HAP-1 (cell line): ENCODE measurements at regions of chr1 and their contacts with region 1.

Region 1: GRCh38 chr1:20981915-20982314 is 194.8 kb downstream of the EIF4G3 start:
- DNase-seq: no peak
- H3K4me3 ChIP-seq: no peak overlapping the region
- H3K4me1 ChIP-seq: no peaks in the 10 kb centered on the region
- H3K27me3 ChIP-seq: no peaks in the 10 kb centered on the region

Region 2: GRCh38 chr1:20840731-20841130 is 141.2 kb before region 1 on chr1:
- in situ Hi-C with region 1: no loop called
- DNase-seq: no peak
- H3K4me3 ChIP-seq: no peak overlapping the region
- H3K4me1 ChIP-seq: peaks cover 12% of the 10 kb centered on the region
- H3K27me3 ChIP-seq: no peaks in the 10 kb centered on the region

Region 3: DNA sequence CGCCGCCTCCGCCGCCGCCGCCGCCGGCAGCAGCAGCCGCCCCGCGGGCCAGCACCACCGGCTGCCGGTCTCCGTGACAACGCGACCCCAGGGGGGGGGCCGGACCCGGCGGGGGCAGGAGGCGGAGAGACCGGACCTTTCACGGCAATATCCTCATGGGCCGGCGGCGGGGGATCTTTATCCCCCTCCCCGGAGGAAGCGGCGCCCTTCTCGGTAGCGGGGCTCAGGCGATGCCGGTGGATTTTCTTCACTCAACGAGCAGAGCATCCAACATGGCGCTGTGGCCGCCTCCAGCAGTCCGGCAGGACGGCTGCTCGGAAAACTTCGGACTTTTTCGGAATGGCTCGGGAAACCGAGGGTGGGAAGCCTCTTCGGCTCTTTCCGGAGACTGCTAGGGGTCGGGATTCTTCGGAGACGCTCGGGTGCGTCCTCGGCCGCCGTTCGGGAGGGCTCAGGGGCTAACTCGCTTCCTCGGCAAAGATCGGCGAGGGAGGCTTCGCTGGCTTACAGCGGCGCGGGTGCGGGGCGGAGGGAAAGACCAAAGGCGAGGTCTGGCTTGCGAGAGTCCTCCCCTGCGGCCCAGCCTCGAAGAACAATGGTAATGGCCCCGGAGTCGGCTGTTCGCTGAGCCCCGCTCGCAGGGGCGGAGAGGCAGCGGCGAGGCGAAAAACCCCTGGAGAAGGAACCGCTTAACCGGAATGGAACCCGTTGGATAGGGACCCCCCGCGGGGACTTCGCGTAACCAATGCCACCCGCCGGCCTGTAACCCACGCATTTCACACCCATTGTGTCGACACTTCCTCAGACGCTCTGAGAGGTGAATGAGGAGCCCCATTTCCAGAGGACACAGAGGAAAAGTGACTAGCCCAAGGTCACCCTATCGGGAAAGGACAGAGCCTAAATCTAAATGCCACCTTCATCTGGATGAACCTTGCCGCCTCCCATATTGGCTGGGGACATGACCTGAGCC is 195.0 kb after region 1 on chr1 and contains the start of gene EIF4G3:
- in situ Hi-C with region 1: loop called (anchors 25 kb)
- DNase-seq: peak; percentile 96 to 100
- H3K4me3 ChIP-seq: peak within 1 kb of the TSS; percentile 86
- H3K4me1 ChIP-seq: peaks cover 14% of the 10 kb centered on the region
- H3K27me3 ChIP-seq: no peaks in the 10 kb centered on the region